A549 (cell line): ENCODE measurements at regions of chr2 and their contacts with region 1.

Region 1: DNA sequence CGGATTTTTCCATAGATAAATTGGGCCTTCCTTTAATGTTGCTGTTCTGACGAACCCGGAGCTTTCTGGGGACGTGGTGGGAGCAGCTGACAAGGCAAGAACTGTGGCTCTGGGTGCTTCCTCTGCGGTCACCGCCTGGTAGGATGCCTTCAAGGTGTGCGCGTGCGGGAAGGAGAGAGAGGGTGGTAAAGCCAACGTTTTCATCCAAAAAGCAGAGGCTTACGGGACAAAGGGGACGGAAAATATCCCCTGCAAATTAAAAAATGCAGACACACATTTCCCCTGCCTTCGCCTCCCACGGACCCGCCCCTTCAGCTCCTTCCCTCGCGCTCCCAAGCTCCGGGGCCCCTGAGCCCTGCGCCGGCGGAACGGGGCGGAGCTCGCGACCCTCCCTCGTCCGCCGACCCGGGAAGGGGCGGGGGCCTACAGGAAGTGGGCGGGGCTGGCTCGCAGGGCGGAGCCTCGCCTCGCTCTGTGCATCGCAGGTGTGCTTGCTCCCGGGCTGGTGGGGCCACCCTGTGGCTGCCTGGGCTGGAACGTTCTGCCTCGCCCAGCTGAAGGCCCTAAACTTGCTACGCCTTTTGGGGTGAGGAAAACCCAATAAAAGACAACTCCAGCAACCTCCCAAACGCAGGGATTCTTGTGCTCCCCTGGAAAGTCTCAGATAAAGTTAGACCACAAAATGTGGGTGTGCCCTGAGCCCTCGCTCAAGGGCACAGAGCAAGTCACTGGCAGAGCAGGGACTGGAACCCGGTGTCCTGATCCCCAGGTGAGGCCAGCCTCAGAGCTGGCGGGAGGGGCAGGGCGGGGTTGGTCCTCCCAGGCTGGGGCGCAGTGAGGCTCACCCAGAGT is 25.4 kb upstream of the SLC66A3 start:
- DNase-seq: peak; percentile 59 to 74
- ATAC-seq: peak; percentile 66 to 81
- H3K4me3 ChIP-seq: peak overlapping the region; percentile 45
- H3K27ac ChIP-seq: peak overlapping the region; percentile 67 to 77
- H3K4me1 ChIP-seq: peaks cover 16% of the 10 kb centered on the region; the same call in 2 of the 3 replicates
- CTCF ChIP-seq: peak; percentile 72
- EP300 ChIP-seq: no peak
- POLR2A ChIP-seq: no peak
- RAD21 ChIP-seq: peak; percentile 74 to 86

Region 2: GRCh38 chr2:10821296-10821695 is 308.5 kb before region 1 on chr2:
- CTCF ChIA-PET with region 1: interaction called, 62 read pairs
- POLR2A ChIA-PET with region 1: no interaction called
- DNase-seq: no peak
- ATAC-seq: no peak
- H3K4me3 ChIP-seq: no peak overlapping the region
- H3K27ac ChIP-seq: no peak overlapping the region
- H3K4me1 ChIP-seq: no peaks in the 10 kb centered on the region
- CTCF ChIP-seq: no peak
- EP300 ChIP-seq: no peak
- POLR2A ChIP-seq: no peak
- RAD21 ChIP-seq: no peak

Region 3: DNA sequence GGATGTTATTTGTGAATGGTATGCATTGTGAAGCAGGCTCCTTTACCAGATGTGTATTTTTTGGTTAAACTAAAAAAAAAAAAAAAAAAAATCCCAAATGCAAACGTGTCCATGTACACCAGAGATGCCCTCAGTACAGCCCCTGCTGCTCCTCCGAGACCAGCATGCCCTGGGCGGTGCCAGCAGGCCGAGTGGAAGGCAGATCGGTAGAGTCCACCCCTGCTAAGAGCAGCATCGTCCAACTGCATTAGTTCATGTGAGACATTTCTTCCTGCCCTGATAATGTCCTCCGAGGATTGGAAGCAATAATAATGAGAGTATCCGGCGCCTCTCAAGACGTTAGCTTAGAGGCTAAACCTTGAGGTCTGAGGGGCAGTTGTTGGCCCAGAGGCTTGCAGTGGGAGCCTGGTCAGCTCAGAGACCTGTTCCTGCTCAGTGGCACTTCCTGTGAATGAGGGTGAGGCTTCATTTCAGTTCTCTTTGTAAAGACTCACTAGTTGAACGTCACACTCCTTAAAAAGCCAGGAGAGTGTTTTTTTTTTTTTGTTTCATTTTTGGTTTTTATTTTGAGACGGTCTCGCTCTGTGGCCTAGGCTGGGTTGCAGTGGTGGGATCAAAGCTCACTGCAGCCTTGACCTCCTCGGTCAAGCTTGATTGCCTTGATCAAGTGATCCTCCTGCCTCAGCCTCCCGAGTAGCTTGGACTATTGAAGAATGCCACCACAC is 31.1 kb after region 1 on chr2:
- CTCF ChIA-PET with region 1: interaction called, 224 read pairs
- POLR2A ChIA-PET with region 1: interaction called, 17 read pairs
- DNase-seq: no peak
- ATAC-seq: no peak
- H3K4me3 ChIP-seq: no peak overlapping the region
- H3K27ac ChIP-seq: no peak overlapping the region
- H3K4me1 ChIP-seq: peaks cover 8% of the 10 kb centered on the region; the same call in 2 of the 3 replicates
- CTCF ChIP-seq: no peak
- EP300 ChIP-seq: no peak
- POLR2A ChIP-seq: no peak
- RAD21 ChIP-seq: no peak

Region 4: DNA sequence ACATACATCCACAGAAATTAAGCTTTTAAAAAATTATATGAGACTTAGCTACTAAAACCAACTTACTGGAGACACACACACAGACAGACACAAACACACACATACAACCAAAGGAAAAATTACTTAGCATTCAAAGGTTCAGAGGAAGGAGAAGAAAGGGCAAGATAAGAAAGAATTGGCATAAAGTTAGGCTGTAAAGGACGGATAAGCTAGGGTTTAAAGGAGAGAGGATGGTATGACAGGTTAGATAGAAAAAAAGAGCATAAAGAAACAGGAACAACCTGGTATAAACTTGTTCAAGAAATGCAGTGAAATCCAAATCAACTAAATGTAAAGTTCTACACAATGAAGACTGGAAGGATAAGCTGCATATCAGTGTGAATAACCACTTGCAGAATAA is 98.9 kb after region 1 on chr2:
- CTCF ChIA-PET with region 1: interaction called, 31 read pairs
- POLR2A ChIA-PET with region 1: no interaction called
- DNase-seq: no peak
- ATAC-seq: no peak
- H3K4me3 ChIP-seq: no peak overlapping the region
- H3K27ac ChIP-seq: no peak overlapping the region
- H3K4me1 ChIP-seq: no peaks in the 10 kb centered on the region
- CTCF ChIP-seq: no peak
- EP300 ChIP-seq: no peak
- POLR2A ChIP-seq: no peak
- RAD21 ChIP-seq: no peak

Region 5: DNA sequence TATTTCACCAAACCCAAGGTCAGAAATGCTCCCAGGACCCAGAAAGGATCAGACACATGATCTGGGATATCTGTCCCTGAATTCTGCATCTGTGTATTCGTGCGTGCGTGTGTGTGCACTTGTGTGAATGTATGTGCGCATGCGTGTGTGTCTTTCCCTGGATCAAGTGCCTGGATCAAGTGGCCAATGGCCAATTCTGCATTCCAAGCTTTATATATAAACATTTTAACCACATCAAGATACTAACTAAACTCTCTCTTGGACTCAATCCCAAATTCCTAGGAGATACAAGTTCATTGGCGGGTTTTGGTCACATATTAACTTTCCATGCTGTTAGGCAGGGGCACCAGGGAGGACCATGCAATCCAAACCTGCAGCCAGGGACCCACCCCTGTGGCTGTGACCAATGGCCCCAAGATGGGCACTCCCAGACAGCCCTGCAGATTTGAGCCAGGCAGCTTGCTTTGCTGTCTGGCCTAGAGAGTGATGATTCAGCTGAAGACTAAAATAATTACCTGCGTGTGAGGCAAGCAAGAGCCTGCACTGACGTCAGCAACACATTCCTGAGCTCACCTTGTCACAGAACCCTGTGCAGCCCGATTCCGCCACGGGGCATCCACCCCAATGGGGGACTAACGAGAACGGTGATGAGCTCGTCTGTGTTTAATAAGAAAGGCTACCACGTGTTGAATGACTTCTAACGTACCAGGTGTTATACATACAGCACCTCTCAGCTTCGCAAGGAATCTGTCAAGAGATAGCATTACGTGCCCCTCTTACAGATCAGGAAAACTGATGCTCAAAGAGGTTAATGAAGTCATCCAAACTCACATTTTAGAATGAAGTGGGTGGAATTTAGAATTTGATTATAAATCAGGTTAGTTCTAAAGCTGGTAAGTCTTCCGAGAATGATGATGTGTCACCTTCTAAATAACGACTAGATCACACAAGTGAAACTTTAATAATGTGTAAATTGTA is 260.0 kb after region 1 on chr2:
- CTCF ChIA-PET with region 1: interaction called, 13 read pairs
- POLR2A ChIA-PET with region 1: interaction called, 3 read pairs
- DNase-seq: peak; percentile 98 to 99
- ATAC-seq: peak; percentile 82 to 86
- H3K4me3 ChIP-seq: no peak overlapping the region
- H3K27ac ChIP-seq: peak overlapping the region; percentile 86 to 92
- H3K4me1 ChIP-seq: peaks cover 89% of the 10 kb centered on the region
- CTCF ChIP-seq: no peak
- EP300 ChIP-seq: peak; percentile 94 to 97
- POLR2A ChIP-seq: no peak
- RAD21 ChIP-seq: peak; percentile 0 to 37; a peak in 3 of 5 replicates

Region 6: DNA sequence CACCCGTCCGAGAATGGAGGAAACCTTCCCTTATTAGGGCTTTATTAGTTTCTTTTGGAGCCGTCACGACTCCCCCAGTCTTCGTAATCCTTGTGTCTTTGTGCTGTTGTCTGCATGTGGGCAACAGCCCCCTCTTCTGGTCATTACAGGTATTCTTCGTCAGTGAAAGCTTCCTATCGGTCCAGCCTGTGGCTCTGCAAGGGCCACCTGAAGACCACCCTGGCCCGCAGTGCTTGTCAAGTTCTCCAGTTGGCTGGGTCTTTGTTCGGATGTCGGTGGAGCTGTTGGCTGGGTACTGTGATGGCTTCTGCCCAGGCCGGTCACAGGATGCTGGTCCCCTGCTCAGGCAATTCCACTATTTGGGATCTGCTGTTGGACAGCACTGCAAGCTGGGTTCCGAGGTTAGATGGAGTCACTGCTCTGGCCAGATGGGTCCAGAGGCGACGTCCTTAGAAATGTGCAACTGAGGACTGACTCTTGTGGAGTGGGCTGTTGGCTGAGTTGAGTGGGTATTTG is 317.0 kb after region 1 on chr2:
- CTCF ChIA-PET with region 1: interaction called, 116 read pairs
- POLR2A ChIA-PET with region 1: interaction called, 6 read pairs
- DNase-seq: peak; percentile 58 to 73
- ATAC-seq: peak; percentile 87 to 88
- H3K4me3 ChIP-seq: no peak overlapping the region
- H3K27ac ChIP-seq: no peak overlapping the region
- H3K4me1 ChIP-seq: no peaks in the 10 kb centered on the region
- CTCF ChIP-seq: peak; percentile 95
- EP300 ChIP-seq: no peak
- POLR2A ChIP-seq: no peak
- RAD21 ChIP-seq: peak; percentile 89 to 91

Region 7: GRCh38 chr2:11589316-11589940 is 459.6 kb after region 1 on chr2:
- CTCF ChIA-PET with region 1: interaction called, 333 read pairs
- POLR2A ChIA-PET with region 1: interaction called, 3 read pairs
- DNase-seq: no peak
- ATAC-seq: peak; percentile 15 to 62; a peak in 3 of 6 replicates
- H3K4me3 ChIP-seq: no peak overlapping the region
- H3K27ac ChIP-seq: no peak overlapping the region
- H3K4me1 ChIP-seq: no peaks in the 10 kb centered on the region
- CTCF ChIP-seq: peak; percentile 27; the same call in 2 of the 3 replicates
- EP300 ChIP-seq: no peak
- POLR2A ChIP-seq: no peak
- RAD21 ChIP-seq: peak; percentile 13 to 26; a peak in 1 of 5 replicates

Region 8: GRCh38 chr2:11617946-11618707 is 488.3 kb after region 1 on chr2:
- CTCF ChIA-PET with region 1: no interaction called
- POLR2A ChIA-PET with region 1: no interaction called
- DNase-seq: no peak
- ATAC-seq: peak; percentile 67 to 80
- H3K4me3 ChIP-seq: no peak overlapping the region
- H3K27ac ChIP-seq: no peak overlapping the region
- H3K4me1 ChIP-seq: no peaks in the 10 kb centered on the region
- CTCF ChIP-seq: no peak
- EP300 ChIP-seq: no peak
- POLR2A ChIP-seq: no peak
- RAD21 ChIP-seq: no peak